Breast epithelium (tissue), 4 donors: ENCODE measurements at regions of chr2 and their contacts with region 1.

Region 1: GRCh38 chr2:65957886-65958285 is 477.0 kb upstream of the MEIS1 start:
- DNase-seq: no peak
- H3K4me3 ChIP-seq: no peak overlapping the region
- H3K27ac ChIP-seq: no peak overlapping the region
- H3K4me1 ChIP-seq: no peaks in the 10 kb centered on the region
- H3K27me3 ChIP-seq: no peaks in the 10 kb centered on the region
- CTCF ChIP-seq: no peak
- POLR2A ChIP-seq: no peak

Region 2: DNA sequence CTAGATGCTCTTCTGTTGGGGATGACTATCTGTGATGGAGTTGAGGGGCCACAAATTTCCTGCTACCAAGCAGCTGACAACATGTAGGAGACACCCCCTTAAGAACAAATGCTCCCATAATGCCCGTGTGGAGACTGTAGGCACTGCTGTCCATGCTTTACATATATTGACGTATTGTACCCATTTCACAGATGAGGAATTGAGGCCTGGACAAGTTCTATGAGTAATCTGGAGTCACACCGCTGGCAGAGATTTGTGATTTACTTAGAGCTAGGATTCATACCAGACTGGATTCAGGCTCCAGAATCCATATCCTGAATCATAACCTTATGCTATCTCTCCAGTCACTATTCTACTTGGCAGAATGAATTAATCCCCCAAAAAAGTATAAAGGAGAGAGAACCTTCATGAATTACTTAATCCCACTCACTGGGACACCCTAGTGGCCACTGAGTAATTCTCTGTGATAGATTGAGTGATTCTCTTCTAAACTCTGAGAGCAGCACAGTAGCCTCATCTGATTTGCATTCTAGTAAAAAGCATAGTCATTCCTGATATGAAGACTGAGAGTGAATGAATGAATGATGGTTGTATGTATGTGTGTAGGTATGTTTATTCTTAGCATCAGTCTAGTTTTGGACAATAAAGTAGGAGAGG is 16.3 kb after region 1 on chr2:
- intact Hi-C with region 1: loop called (anchors 1 kb)
- DNase-seq: no peak
- H3K4me3 ChIP-seq: no peak overlapping the region
- H3K27ac ChIP-seq: no peak overlapping the region
- H3K4me1 ChIP-seq: no peaks in the 10 kb centered on the region
- H3K27me3 ChIP-seq: no peaks in the 10 kb centered on the region
- CTCF ChIP-seq: no peak
- POLR2A ChIP-seq: no peak

Region 3: DNA sequence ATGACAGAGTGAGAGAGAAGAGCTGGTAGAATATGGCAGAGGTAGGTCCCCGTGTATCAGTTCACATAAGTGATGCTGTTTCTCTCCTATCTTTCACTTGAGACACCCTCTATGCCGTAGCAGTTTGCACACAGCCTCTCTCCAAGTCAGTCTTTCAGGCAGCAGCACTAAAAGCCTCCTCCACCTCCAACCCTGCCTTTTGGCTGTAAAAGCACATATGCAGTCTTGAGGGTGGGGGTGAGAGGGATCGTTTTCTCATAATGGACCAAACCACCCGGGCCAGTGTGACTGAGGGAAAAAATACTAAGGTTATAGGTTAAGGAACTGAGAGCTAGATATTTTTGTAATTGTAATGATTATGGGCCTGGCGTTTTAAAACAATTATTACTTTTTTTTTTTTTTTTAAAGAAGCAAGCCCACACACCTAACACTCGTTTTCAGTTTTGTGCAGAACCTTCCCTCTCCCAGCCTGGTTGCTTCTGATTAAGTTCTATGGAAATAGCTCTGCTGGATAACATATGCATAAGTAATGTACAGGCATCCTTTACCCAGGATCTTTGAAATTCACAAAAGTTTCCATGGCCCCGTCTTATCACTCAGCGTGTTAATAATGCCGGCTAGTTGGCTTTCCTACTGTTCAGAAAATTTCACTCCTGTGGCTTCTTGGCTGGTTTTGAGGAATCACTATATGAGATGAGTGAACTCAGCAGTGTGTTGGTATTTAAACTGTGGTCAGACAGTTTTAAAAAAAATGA is 364.8 kb after region 1 on chr2:
- intact Hi-C with region 1: no loop called
- DNase-seq: no peak
- H3K4me3 ChIP-seq: no peak overlapping the region
- H3K27ac ChIP-seq: no peak overlapping the region
- H3K4me1 ChIP-seq: no peaks in the 10 kb centered on the region
- H3K27me3 ChIP-seq: no peaks in the 10 kb centered on the region
- CTCF ChIP-seq: no peak
- POLR2A ChIP-seq: no peak

Region 4: GRCh38 chr2:67463810-67464209 is 1505.9 kb after region 1 on chr2:
- intact Hi-C with region 1: loop called (anchors 5 kb)
- DNase-seq: peak in 1 of 2 donors; percentile 17
- H3K4me3 ChIP-seq: no peak overlapping the region
- H3K27ac ChIP-seq: no peak overlapping the region
- H3K4me1 ChIP-seq: no peaks in the 10 kb centered on the region
- H3K27me3 ChIP-seq: no peaks in the 10 kb centered on the region
- CTCF ChIP-seq: no peak
- POLR2A ChIP-seq: no peak